ENCODE measurements at regions of chr5 and their contacts with region 1.

Region 1: DNA sequence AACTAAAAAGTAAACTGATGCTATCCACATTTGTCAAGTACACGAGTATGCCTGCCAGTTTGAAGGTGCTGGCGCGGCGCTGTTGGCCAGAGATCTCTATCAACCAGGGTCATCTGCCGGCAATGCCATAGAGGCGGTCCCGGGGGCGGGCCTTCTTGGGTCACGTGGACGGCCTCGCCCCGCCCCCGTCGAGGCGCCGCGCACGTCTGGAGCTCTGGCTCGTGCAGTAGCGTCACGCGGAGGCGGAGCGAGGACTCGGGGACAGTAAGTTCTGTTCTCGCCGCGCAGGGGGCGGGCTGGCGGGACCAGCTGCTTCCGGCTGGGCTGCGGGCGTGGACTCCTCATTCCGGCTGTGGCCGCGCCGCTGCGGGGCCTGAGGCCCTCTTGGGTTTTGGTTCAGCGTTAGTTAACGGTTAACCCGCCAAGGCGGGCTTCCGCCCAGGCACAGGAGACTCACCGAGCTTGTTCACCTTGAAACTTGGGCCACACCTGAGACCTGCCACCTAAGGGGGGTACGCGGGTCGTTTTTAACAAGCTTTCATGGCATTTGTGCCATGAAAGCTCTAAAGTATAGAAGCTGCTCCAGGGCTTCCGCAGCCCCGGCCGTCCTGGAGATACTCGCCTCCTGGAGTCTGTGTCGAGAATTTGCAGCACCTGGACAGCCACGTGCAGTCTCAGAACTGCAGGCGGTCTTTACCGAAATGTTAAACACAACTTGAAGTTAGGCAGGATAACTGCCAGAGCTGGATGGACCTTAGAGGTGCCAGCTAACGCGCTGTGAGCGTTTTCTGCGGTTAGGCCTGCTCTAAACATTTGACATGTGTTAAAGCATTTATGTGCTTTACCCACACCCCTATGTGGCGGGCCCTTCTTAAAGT is at the start of gene RFESD:
- DNase-seq: peak; percentile 98
- H3K4me3 Mint-ChIP-seq: peak within 1 kb of the TSS; percentile 78
- H3K27ac Mint-ChIP-seq: peak within 1 kb of the TSS; percentile 89
- H3K4me1 Mint-ChIP-seq: peaks cover 25% of the 10 kb centered on the region
- H3K27me3 Mint-ChIP-seq: no peaks in the 10 kb centered on the region
- total RNA-seq, gene RFESD: 6.9 to 8.8 TPM

Region 2: DNA sequence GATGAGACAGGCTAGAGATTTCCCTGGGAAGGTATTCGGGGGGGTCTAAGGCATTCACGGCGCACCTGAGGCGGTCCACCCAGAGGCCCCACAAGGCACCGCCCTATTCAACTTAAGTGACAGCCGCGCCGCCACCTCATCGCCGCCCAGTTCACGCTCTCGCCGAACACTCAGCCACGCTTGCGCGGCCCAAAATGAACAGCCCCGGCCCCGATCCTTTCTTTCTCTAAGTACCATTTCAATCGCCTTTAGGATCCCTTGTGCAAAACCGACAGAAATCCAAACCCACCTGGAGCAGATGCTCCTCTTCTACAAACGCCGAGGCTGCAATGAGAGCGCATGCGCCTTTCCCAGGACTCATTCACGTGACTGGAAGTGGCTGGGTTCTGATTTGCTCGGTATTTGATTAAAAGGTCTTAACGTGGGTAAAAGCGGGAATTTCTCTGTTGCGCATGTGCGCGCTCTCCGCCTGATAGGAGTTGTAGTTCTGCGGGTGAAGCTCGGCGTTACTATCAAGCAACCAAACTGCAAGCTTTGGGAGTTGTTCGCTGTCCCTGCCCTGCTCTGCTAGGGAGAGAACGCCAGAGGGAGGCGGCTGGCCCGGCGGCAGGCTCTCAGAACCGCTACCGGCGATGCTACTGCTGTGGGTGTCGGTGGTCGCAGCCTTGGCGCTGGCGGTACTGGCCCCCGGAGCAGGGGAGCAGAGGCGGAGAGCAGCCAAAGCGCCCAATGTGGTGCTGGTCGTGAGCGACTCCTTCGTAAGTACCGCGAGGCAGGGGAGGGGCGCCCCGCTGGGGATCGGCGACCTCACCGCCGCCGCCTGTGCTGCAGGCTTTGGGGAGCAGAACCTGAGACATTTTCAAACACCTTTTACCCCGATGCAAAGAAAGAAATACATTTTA is 91.9 kb before region 1 on chr5 and contains the starts of genes ARSK and SKIC3:
- CTCF ChIA-PET with region 1: interaction called, 3 read pairs
- POLR2A ChIA-PET with region 1: interaction called, 5 read pairs
- intact Hi-C with region 1: loop called (anchors 1 kb)
- DNase-seq: peak; percentile 95
- H3K4me3 Mint-ChIP-seq: peak within 1 kb of the TSS; percentile 89
- H3K27ac Mint-ChIP-seq: peak within 1 kb of the TSS; percentile 92
- H3K4me1 Mint-ChIP-seq: peaks cover 42% of the 10 kb centered on the region
- H3K27me3 Mint-ChIP-seq: no peaks in the 10 kb centered on the region
- total RNA-seq, gene ARSK: 4.5 to 4.6 TPM
- total RNA-seq, gene SKIC3: 74.7 to 78.1 TPM

Region 3: GRCh38 chr5:95609711-95610110 is 37.1 kb before region 1 on chr5:
- CTCF ChIA-PET with region 1: no interaction called
- POLR2A ChIA-PET with region 1: no interaction called
- intact Hi-C with region 1: no loop called
- DNase-seq: no peak
- H3K4me3 Mint-ChIP-seq: no peak overlapping the region
- H3K27ac Mint-ChIP-seq: no peak overlapping the region
- H3K4me1 Mint-ChIP-seq: peaks cover 9% of the 10 kb centered on the region
- H3K27me3 Mint-ChIP-seq: no peaks in the 10 kb centered on the region

Region 4: GRCh38 chr5:95631991-95632675 is 14.7 kb before region 1 on chr5:
- CTCF ChIA-PET with region 1: interaction called, 5 read pairs
- POLR2A ChIA-PET with region 1: interaction called, 16 read pairs
- intact Hi-C with region 1: loop called (anchors 1 kb)
- DNase-seq: peak; percentile 86
- H3K4me3 Mint-ChIP-seq: peak overlapping the region; percentile 51
- H3K27ac Mint-ChIP-seq: peak overlapping the region; percentile 91
- H3K4me1 Mint-ChIP-seq: peaks cover 22% of the 10 kb centered on the region
- H3K27me3 Mint-ChIP-seq: no peaks in the 10 kb centered on the region

Region 5: DNA sequence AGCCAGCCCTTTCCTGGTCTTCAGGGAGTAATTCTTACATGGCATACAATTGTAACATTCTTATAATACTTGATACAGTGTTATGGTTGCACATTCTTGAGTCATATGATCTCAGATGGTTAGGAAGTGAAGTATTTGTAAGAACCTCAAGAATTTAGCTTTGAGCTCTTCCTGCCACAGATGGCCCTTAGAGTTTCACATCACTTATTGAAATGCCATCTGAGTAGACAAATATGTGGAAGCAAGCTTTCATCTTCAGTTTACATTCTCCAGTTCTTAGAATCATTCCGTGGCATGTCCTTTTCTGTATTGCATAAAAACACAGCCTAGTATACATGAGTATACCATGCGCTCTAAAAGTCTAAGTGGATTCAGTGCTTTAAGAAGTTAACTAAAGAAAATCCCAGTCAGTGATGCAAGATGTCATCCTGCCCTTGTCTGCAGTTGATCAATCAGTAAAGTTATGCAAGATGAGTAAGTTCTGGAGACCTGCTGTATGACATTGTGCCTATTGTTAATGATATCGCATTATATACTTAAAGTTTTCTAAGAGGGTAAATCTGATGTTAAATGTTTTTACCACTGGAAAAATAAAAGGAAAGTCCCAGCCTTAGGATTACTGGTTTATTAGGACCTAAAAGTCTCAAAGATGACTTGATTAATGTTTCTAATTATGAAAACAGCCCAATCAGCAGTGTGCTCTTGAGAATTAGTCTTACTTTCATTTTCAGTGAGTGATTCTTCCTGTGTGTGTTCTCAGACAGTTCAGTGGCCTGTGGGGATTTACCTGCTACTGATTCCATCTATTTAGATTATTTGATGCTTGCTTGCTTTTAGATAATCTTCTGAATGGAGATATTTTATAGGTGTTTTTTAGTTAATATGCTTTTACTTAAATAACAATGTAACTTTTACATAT is 113.7 kb after region 1 on chr5:
- CTCF ChIA-PET with region 1: no interaction called
- POLR2A ChIA-PET with region 1: no interaction called
- intact Hi-C with region 1: loop called (anchors 1 kb)
- DNase-seq: no peak
- H3K4me3 Mint-ChIP-seq: peak overlapping the region; percentile 57
- H3K27ac Mint-ChIP-seq: peak overlapping the region; percentile 64
- H3K4me1 Mint-ChIP-seq: peaks cover 23% of the 10 kb centered on the region
- H3K27me3 Mint-ChIP-seq: peaks cover 4% of the 10 kb centered on the region

Region 6: GRCh38 chr5:95835682-95836385 is 189.0 kb after region 1 on chr5:
- CTCF ChIA-PET with region 1: interaction called, 6 read pairs
- POLR2A ChIA-PET with region 1: no interaction called
- intact Hi-C with region 1: loop called (anchors 2 kb)
- DNase-seq: no peak
- H3K4me3 Mint-ChIP-seq: peak overlapping the region; percentile 75
- H3K27ac Mint-ChIP-seq: peak overlapping the region; percentile 91
- H3K4me1 Mint-ChIP-seq: peaks cover 50% of the 10 kb centered on the region
- H3K27me3 Mint-ChIP-seq: no peaks in the 10 kb centered on the region

Region 7: GRCh38 chr5:96336351-96336985 is 689.7 kb after region 1 on chr5:
- CTCF ChIA-PET with region 1: no interaction called
- POLR2A ChIA-PET with region 1: no interaction called
- intact Hi-C with region 1: loop called (anchors 5 kb)
- DNase-seq: peak; percentile 67
- H3K4me3 Mint-ChIP-seq: no peak overlapping the region
- H3K27ac Mint-ChIP-seq: no peak overlapping the region
- H3K4me1 Mint-ChIP-seq: peaks cover 11% of the 10 kb centered on the region
- H3K27me3 Mint-ChIP-seq: peaks cover 19% of the 10 kb centered on the region

Measured in activated CD4-positive, alpha-beta memory T cell treated with anti-CD3 and anti-CD28 coated beads for 36 hours (primary cell).